Dendritic cell treated with granulocyte-macrophage colony-stimulating factor and Interleukin-4, amounts not matched to agents 40 ng/mL and 50 ng/mL, for 4 days (primary cell): ENCODE measurements at regions of chr1 and their contacts with region 1.

Region 1: DNA sequence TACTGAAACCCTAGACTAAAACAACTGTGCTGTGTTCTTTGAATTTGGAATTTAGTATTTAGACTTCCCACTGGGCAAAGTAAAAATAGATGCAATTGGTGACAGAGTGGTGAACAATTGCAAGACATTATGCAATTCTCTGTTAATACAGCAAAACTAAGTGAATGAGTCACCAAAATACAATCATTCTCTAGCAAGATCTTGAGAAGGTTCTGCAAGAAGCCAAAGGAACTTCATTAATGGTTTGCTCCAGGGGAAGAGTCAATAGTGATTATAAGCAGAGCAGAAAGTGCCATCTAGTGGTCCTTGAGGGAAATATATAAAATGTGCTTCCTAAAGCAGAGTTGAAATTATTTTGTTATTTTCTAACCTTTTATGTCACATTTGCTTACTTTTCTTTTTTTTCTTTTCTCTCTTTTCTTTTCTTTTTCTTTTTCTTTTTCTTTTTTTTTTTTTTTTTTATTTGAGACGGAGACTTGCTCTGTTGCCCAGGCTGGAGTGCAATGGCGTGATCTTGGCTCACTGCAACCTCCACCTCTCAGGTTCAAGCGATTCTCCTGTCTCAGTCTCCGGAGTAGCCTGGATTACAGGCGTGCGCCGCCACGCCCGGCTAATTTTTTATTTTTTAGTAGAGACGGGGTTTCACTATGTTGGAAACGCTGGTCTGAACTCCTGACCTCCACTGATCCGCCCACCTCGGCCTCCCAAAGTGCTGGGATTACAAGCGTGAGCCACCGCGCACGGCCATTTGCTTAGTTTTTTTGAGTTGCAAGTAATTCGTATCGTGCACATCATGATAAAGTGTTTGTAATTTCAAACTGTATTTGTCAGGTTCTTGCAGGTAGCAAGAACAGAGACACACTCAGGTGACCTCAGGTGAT is 99.2 kb downstream of the CTH start:
- H3K4me3 Mint-ChIP-seq: no peak overlapping the region
- H3K27ac Mint-ChIP-seq: no peak overlapping the region
- H3K4me1 Mint-ChIP-seq: no peaks in the 10 kb centered on the region
- H3K27me3 Mint-ChIP-seq: peaks cover 1% of the 10 kb centered on the region

Region 2: DNA sequence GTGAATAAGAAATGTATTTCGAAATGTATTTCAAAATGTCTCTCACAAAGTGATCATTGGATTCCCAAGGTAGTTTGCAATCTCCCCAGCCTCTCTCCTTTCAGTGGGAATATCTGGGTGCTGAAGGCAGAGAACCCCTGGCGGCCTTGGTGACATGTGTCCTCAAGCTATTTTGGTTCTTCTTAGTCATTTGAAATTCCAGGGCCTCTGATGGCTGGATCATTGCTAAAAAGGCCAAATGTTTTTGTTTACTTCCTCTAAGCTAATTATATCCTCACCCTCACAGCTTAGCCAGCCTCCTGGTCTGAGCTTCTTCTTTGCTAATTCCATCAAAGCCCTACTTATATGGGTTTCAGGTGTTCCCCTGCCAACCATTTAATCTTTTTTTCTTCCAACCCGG is 376.1 kb before region 1 on chr1:
- intact Hi-C with region 1: loop called (anchors 1 kb)
- H3K4me3 Mint-ChIP-seq: no peak overlapping the region
- H3K27ac Mint-ChIP-seq: no peak overlapping the region
- H3K4me1 Mint-ChIP-seq: peaks cover 6% of the 10 kb centered on the region
- H3K27me3 Mint-ChIP-seq: no peaks in the 10 kb centered on the region

Region 3: DNA sequence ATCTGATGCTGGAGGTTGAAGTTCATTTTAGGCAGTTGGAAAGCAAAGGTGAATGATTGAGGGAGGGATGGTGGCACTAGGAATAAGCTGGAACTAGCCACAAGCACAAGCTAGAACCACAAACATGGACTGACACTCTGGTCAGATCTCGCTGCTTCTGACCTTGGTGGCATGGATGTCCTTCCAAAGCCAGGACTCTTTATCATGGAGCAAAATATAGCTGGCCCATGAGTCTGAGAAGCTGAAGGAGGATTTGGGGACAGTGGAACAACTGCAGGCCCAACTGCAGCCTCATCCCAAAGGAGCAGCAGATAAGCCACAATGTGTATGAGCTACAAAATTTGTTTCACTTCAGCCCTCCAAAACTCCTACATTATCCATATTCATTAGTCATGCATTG is 253.6 kb before region 1 on chr1:
- intact Hi-C with region 1: loop called (anchors 10 kb)
- H3K4me3 Mint-ChIP-seq: no peak overlapping the region
- H3K27ac Mint-ChIP-seq: no peak overlapping the region
- H3K4me1 Mint-ChIP-seq: no peaks in the 10 kb centered on the region
- H3K27me3 Mint-ChIP-seq: no peaks in the 10 kb centered on the region

Region 4: GRCh38 chr1:70277875-70278274 is 232.4 kb before region 1 on chr1:
- intact Hi-C with region 1: no loop called
- H3K4me3 Mint-ChIP-seq: no peak overlapping the region
- H3K27ac Mint-ChIP-seq: no peak overlapping the region
- H3K4me1 Mint-ChIP-seq: no peaks in the 10 kb centered on the region
- H3K27me3 Mint-ChIP-seq: no peaks in the 10 kb centered on the region

Region 5: DNA sequence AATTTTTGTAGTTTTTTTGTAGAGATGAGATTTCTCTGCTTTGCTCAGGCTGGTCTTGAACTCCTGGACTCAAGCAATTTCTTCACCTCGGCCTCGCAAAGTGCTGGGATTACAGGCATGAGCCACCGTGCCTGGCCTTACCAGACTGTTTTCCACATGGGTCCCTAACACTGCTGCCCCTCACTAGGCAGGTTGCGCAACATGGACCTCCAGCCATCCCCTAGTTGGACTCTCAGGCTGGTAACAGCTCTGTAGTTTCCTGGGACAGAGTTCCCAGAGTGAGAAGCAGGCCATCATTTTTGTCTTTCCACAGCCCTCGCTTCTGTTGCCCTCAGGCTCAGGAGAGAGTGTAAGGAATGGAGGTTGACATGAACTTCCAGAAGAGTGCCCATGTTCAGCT is 56.9 kb after region 1 on chr1:
- intact Hi-C with region 1: no loop called
- H3K4me3 Mint-ChIP-seq: no peak overlapping the region
- H3K27ac Mint-ChIP-seq: no peak overlapping the region
- H3K4me1 Mint-ChIP-seq: no peaks in the 10 kb centered on the region
- H3K27me3 Mint-ChIP-seq: no peaks in the 10 kb centered on the region

Region 6: DNA sequence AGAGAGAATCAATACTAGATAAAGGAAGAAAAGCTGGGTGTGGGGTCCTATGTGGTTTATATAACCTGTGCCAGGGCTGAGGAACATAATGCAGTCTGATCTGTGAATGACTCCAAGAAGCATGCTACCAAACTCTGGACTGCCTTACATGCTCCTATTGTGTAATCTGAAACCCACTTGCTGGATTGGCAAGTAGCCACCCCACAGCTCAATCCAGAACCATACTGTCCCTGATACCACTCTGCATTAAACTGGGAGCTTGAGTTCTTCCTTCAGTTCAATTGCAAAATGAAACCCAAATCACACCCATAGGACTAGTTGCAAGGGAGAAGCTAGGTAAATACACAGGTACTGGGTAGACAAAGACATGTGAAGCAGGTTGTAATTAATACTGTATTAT is 1887.5 kb after region 1 on chr1:
- intact Hi-C with region 1: no loop called
- H3K4me3 Mint-ChIP-seq: no peak overlapping the region
- H3K27ac Mint-ChIP-seq: no peak overlapping the region
- H3K4me1 Mint-ChIP-seq: no peaks in the 10 kb centered on the region
- H3K27me3 Mint-ChIP-seq: no peaks in the 10 kb centered on the region